ENCODE measurements at regions of chr7 and their contacts with region 1.

Region 1: GRCh38 chr7:127447326-127447945 is 54.9 kb upstream of the ZNF800 start:
- H3K4me3 ChIP-seq: no peak overlapping the region
- H3K27ac ChIP-seq: no peak overlapping the region
- H3K4me1 ChIP-seq: no peaks in the 10 kb centered on the region
- CTCF ChIP-seq: no peak

Region 2: DNA sequence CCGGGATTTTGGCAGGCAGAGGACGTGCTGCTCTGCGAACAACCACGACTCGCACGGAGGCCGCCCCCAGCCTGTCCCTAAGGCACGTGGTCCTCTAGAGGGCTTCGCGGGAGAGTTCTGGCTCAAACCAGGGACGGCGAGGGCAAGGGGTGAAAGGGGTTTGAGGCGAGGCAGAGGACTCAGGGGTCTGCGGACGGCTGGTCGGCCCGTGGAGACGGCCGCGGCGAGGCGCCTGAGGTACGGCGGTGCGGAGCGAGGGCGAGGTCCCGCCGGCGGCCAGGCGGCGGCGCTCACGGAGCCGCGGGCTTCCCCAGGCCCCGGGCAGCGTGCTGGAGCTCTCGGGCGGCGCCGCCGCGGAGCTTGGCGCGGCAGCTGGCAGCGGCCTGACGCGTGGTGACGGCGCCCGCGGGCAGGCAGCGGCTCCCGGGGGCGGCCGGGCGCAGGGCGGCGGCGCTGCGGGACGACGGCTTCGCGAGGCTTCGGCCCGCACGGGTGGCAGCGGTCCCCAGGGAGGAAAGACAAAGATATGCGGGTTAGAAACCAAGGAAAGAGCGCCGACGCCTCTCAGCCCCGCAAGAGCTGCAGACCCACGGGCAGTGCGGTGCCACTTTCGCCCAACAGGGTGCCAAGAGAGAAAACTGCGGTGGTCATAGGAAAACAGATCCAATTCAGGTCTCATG is 99.7 kb before region 1 on chr7:
- CTCF ChIA-PET with region 1: interaction called, 22 read pairs
- POLR2A ChIA-PET with region 1: no interaction called
- H3K4me3 ChIP-seq: peak overlapping the region; percentile 31
- H3K27ac ChIP-seq: no peak overlapping the region
- H3K4me1 ChIP-seq: no peaks in the 10 kb centered on the region
- CTCF ChIP-seq: peak; percentile 5; the same call in 1 of the 2 replicates

Region 3: DNA sequence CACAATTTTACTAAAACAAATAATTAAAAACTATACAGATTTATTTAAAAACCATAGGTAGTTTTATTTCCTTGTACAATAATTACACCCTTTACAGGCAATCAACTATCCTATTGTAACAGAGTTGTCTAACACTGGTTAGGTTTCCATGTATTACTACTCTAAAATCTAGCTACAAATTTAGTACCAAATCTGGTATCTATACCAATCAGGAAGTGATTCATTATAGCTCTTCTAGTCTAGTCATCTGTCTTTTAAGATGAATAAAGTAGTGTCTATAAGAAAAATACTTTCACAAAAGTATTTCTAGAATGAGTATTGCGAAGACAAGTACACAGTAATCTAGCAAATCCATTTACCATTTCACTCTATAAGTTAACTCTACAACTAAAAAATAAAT is 71.8 kb before region 1 on chr7:
- CTCF ChIA-PET with region 1: no interaction called
- POLR2A ChIA-PET with region 1: no interaction called
- H3K4me3 ChIP-seq: no peak overlapping the region
- H3K27ac ChIP-seq: no peak overlapping the region
- H3K4me1 ChIP-seq: peaks cover 13% of the 10 kb centered on the region; the same call in 1 of the 2 replicates
- CTCF ChIP-seq: no peak

Measured in HEK293 (cell line).